Posterior vena cava (tissue), 2 donors: ENCODE measurements at regions of chr2 and their contacts with region 1.

Region 1: DNA sequence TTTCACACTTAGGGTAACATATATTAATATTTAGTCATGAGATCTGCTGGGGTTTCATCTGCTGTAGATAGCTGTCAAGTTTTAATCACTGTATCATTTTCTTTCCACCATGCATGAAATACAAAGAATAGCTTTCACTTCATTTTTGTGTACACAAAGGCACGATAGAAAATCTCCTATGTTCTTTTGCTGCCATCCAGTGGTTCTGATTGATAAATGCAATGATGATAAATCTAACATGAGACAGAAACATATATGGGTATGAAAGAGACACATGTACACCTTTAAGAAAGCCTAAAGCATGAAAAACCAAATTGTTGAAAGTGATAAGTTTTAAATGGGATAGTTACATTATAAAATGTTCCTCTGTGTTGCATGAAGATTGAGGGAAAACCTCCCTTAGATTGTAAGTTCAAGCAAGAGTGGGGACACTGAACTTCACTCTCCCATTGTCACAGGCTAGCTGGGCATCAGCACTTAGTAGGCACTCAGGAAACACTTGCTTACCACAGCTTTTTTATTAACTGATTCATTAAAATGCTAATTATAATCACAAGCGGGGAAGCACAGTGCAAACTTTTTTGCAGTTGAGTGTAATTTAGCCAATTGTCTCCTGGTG is 31.2 kb downstream of the C1D start:
- DNase-seq: no peak

Region 2: GRCh38 chr2:66429071-66429477 is 1602.6 kb before region 1 on chr2:
- intact Hi-C with region 1: loop called in 1 of 2 experiments (anchors 10 kb)
- DNase-seq: no peak

Region 3: GRCh38 chr2:67840460-67841068 is 191.1 kb before region 1 on chr2:
- intact Hi-C with region 1: loop called in 1 of 2 experiments (anchors 10 kb)
- DNase-seq: peak; percentile 88

Region 4: DNA sequence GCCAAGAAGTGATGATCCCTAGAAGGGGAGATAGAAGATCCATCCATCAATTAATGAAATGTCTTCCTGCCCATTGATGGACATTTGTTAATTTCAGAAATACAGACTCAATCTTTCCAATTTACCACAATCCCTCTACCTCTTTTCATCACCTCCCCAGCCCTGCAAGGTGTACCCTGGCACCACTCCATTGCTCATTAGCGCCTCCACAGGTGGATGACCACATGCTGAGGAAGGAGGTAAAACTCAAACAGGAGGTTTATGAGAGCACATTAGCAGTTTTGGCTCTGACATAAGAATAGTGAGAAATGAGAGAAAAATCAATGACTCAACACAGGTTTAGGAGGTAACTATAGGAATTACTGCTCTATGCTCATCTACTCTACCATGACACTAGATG is 176.9 kb before region 1 on chr2:
- intact Hi-C with region 1: loop called (anchors 10 kb)
- DNase-seq: no peak

Region 5: GRCh38 chr2:68943581-68944568 is 912.2 kb after region 1 on chr2:
- intact Hi-C with region 1: no loop called
- DNase-seq: no peak